MCF 10A (cell line): ENCODE measurements at regions of chr1 and their contacts with region 1.

Region 1: GRCh38 chr1:23403735-23404486 is 20.6 kb downstream of the TCEA3 start:
- DNase-seq: peak; percentile 100
- H3K4me3 Mint-ChIP-seq: peak overlapping the region; percentile 63
- H3K27ac Mint-ChIP-seq: peak overlapping the region; percentile 64
- H3K4me1 Mint-ChIP-seq: peaks cover 31% of the 10 kb centered on the region
- H3K27me3 Mint-ChIP-seq: no peaks in the 10 kb centered on the region
- CTCF ChIP-seq: peak; percentile 90

Region 2: GRCh38 chr1:22976461-22977243 is 427.3 kb before region 1 on chr1:
- CTCF ChIA-PET with region 1: no interaction called
- POLR2A ChIA-PET with region 1: no interaction called
- intact Hi-C with region 1: loop called (anchors 1 kb)
- DNase-seq: peak; percentile 88
- H3K4me3 Mint-ChIP-seq: no peak overlapping the region
- H3K27ac Mint-ChIP-seq: no peak overlapping the region
- H3K4me1 Mint-ChIP-seq: peaks cover 30% of the 10 kb centered on the region
- H3K27me3 Mint-ChIP-seq: no peaks in the 10 kb centered on the region
- CTCF ChIP-seq: peak; percentile 92

Region 3: GRCh38 chr1:23282957-23283356 is 121.0 kb before region 1 on chr1:
- CTCF ChIA-PET with region 1: no interaction called
- POLR2A ChIA-PET with region 1: interaction called, 10 read pairs
- intact Hi-C with region 1: loop called (anchors 5 kb)
- DNase-seq: peak; percentile 69
- H3K4me3 Mint-ChIP-seq: peak overlapping the region; percentile 26
- H3K27ac Mint-ChIP-seq: peak overlapping the region; percentile 80
- H3K4me1 Mint-ChIP-seq: peaks cover 32% of the 10 kb centered on the region
- H3K27me3 Mint-ChIP-seq: no peaks in the 10 kb centered on the region
- CTCF ChIP-seq: no peak

Region 4: DNA sequence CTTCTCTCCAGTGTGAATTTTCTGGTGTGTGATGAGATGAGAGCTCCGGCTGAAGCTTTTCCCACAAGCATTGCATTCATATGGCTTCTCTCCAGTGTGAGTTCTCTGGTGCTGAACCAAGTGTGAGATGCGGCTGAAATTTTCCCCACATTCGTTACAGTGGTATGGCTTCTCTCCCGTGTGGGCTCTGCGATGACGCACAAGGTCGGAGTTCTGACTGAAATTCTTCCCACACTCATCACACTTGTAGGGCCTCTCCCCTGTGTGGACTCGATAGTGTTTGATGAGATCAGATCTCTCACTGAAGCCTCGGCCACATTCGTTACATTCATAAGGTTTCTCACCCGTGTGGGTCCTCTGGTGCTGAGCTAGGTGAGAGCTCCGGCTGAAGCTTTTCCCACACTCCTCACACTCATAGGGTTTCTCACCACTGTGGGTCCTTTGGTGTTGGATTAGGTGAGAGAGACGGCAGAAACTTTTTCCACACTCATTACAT is 41.6 kb before region 1 on chr1:
- CTCF ChIA-PET with region 1: interaction called, 41 read pairs
- POLR2A ChIA-PET with region 1: interaction called, 247 read pairs
- intact Hi-C with region 1: no loop called
- DNase-seq: no peak
- H3K4me3 Mint-ChIP-seq: no peak overlapping the region
- H3K27ac Mint-ChIP-seq: no peak overlapping the region
- H3K4me1 Mint-ChIP-seq: peaks cover 6% of the 10 kb centered on the region
- H3K27me3 Mint-ChIP-seq: no peaks in the 10 kb centered on the region
- CTCF ChIP-seq: no peak

Region 5: GRCh38 chr1:23376890-23377811 is 26.8 kb before region 1 on chr1:
- CTCF ChIA-PET with region 1: interaction called, 15 read pairs
- POLR2A ChIA-PET with region 1: interaction called, 247 read pairs
- intact Hi-C with region 1: loop called (anchors 2 kb)
- DNase-seq: peak; percentile 89
- H3K4me3 Mint-ChIP-seq: peak overlapping the region; percentile 11
- H3K27ac Mint-ChIP-seq: peak overlapping the region; percentile 87
- H3K4me1 Mint-ChIP-seq: peaks cover 15% of the 10 kb centered on the region
- H3K27me3 Mint-ChIP-seq: no peaks in the 10 kb centered on the region
- CTCF ChIP-seq: no peak

Region 6: DNA sequence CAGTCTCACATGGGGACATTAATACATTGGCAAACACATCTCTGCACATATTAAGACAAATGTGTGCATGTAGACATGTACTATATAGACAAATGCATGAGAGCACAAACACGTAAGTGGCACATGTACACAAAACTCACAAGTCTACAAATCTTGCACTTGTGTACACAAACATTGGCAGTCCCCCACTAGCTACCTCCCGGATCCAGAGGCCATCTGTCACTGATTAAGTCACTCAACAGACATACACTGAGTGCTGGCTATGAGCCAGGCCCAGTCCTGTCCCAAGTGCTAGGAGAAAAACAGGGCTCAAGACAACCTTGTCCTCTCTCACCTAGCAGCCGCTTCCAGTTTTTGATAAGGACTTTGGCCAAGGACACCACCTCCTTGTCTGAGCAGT is 13.7 kb after region 1 on chr1:
- CTCF ChIA-PET with region 1: interaction called, 10 read pairs
- POLR2A ChIA-PET with region 1: interaction called, 6 read pairs
- intact Hi-C with region 1: no loop called
- DNase-seq: no peak
- H3K4me3 Mint-ChIP-seq: no peak overlapping the region
- H3K27ac Mint-ChIP-seq: no peak overlapping the region
- H3K4me1 Mint-ChIP-seq: peaks cover 8% of the 10 kb centered on the region
- H3K27me3 Mint-ChIP-seq: no peaks in the 10 kb centered on the region
- CTCF ChIP-seq: no peak

Region 7: GRCh38 chr1:23484253-23485001 is 80.5 kb after region 1 on chr1:
- CTCF ChIA-PET with region 1: interaction called, 3 read pairs
- POLR2A ChIA-PET with region 1: interaction called, 14 read pairs
- intact Hi-C with region 1: loop called (anchors 5 kb)
- DNase-seq: peak; percentile 90
- H3K4me3 Mint-ChIP-seq: peak overlapping the region; percentile 76
- H3K27ac Mint-ChIP-seq: no peak overlapping the region
- H3K4me1 Mint-ChIP-seq: peaks cover 15% of the 10 kb centered on the region
- H3K27me3 Mint-ChIP-seq: no peaks in the 10 kb centered on the region
- CTCF ChIP-seq: no peak